Mammary epithelial cell (primary cell): ENCODE measurements at regions of chr11 and their contacts with region 1.

Region 1: DNA sequence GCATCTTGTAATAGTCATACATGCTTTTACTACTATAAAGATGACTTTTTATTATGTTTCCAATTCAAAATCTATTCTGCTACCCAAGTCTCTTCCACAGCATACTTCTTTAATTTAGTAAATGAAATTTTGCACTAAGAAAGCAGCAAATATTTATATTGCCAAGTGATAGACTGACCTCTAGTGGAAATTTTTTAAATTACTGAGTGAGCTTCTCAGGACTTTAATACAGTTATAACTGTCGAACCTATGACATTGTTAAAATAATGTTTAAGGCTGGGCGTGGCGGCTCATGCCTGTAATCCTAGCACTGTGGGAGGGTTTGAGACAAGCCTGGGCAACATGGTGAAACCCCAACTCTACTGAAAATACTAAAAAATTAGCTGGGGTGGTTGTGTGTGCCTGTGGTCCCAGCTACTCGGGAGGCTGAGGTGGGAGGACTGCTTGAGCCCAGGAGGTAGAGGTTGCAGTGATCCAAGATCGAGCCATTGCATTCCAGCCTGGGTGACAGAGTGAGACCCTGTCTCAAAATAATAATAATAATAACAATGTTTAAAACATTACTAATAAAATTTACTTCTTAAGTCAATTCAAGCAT is 27.3 kb downstream of the STK33 start:
- DNase-seq: peak; percentile 55
- H3K4me3 ChIP-seq: no peak overlapping the region
- H3K27ac ChIP-seq: peak overlapping the region; percentile 29
- H3K4me1 ChIP-seq: peaks cover 13% of the 10 kb centered on the region
- H3K27me3 ChIP-seq: no peaks in the 10 kb centered on the region
- CTCF ChIP-seq: peak; percentile 43 to 50

Region 2: DNA sequence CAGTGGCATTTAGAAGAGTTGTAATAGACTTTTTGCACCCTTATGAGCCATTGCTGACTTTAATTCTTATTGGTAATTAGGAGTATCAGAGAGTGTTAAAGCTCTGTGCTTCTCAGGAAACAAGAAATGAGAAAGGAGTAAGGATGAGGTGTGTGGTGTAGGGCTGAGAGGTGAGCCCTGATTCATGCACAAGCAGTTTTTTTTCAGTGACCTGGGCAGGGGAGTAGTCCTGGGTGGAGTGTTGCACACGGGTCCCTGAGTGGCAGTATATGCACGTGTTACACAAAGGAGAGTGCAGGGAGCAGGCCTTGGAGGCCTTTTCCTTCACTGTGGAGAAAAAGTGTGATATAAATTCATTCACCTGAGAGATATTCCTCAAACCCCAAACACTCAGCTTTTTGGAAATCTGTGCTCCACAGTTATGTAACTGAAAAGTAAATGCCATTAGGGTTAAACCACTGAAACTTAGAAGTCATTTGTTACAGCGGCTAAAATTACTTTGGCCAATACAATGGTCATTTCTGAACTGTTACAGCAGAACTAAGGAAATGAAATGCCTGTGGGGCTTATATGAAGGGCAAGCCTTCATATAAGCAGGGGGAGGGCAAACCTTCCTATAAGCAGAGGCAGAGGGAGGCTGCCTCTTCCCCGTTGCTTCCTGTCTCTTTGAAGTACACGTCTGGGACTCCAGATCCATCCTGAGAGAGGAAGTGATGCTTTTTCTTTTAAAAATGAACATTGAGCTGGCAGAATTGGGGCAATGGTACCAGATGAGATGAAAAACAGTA is 1144.0 kb before region 1 on chr11:
- CTCF ChIA-PET with region 1: no interaction called
- dilution Hi-C with region 1: no loop called
- in situ Hi-C with region 1: no loop called
- intact Hi-C with region 1: no loop called
- DNase-seq: peak; percentile 4
- H3K4me3 ChIP-seq: no peak overlapping the region
- H3K27ac ChIP-seq: no peak overlapping the region
- H3K4me1 ChIP-seq: peaks cover 14% of the 10 kb centered on the region
- H3K27me3 ChIP-seq: no peaks in the 10 kb centered on the region
- CTCF ChIP-seq: peak in 1 of 2 donors; percentile 14

Region 3: GRCh38 chr11:8006349-8006977 is 560.2 kb before region 1 on chr11:
- CTCF ChIA-PET with region 1: no interaction called
- dilution Hi-C with region 1: no loop called
- in situ Hi-C with region 1: no loop called
- intact Hi-C with region 1: loop called (anchors 1 kb)
- DNase-seq: peak; percentile 53
- H3K4me3 ChIP-seq: no peak overlapping the region
- H3K27ac ChIP-seq: no peak overlapping the region
- H3K4me1 ChIP-seq: no peaks in the 10 kb centered on the region
- H3K27me3 ChIP-seq: no peaks in the 10 kb centered on the region
- CTCF ChIP-seq: peak; percentile 93 to 95

Region 4: GRCh38 chr11:8192016-8192895 is 374.5 kb before region 1 on chr11:
- CTCF ChIA-PET with region 1: no interaction called
- dilution Hi-C with region 1: no loop called
- in situ Hi-C with region 1: no loop called
- intact Hi-C with region 1: loop called (anchors 1 kb)
- DNase-seq: peak; percentile 54
- H3K4me3 ChIP-seq: no peak overlapping the region
- H3K27ac ChIP-seq: no peak overlapping the region
- H3K4me1 ChIP-seq: no peaks in the 10 kb centered on the region
- H3K27me3 ChIP-seq: peaks cover 2% of the 10 kb centered on the region
- CTCF ChIP-seq: peak; percentile 88 to 97

Region 5: GRCh38 chr11:8247312-8247711 is 319.4 kb before region 1 on chr11:
- CTCF ChIA-PET with region 1: interaction called, 5 read pairs
- dilution Hi-C with region 1: no loop called
- in situ Hi-C with region 1: no loop called
- intact Hi-C with region 1: loop called (anchors 1 kb)
- DNase-seq: no peak
- H3K4me3 ChIP-seq: no peak overlapping the region
- H3K27ac ChIP-seq: no peak overlapping the region
- H3K4me1 ChIP-seq: no peaks in the 10 kb centered on the region
- H3K27me3 ChIP-seq: no peaks in the 10 kb centered on the region
- CTCF ChIP-seq: peak; percentile 67 to 83

Region 6: DNA sequence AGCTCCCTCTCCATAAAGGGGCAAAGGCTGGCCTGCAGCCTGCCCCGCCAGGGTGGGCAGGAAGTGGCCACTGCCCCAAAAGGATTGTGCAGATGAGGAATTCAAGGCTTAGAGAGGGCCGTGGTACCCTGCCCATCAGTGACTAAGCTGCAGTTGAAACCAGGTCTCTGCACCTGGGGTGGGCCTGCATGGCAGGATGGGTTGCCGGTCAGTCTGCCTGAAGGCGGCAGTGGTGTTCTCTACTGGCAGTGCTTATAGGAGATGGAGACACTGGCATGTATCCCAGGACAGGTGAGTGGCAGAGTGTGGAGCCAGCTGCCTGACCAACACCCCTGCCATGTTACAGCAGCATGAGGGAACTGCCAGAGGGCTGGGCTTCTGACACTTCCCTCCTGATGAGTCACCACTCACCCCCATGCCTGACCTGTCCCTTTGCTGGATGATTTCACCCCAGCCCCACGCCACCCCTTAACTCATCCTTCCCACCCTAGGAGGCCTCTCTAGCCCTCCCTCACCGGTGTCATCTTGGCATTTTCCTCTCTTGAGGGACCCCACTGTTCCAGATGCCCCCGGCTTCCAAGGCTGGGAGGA is 232.8 kb before region 1 on chr11:
- CTCF ChIA-PET with region 1: no interaction called
- dilution Hi-C with region 1: no loop called
- in situ Hi-C with region 1: no loop called
- intact Hi-C with region 1: loop called (anchors 1 kb)
- DNase-seq: peak; percentile 66
- H3K4me3 ChIP-seq: no peak overlapping the region
- H3K27ac ChIP-seq: no peak overlapping the region
- H3K4me1 ChIP-seq: peaks cover 29% of the 10 kb centered on the region
- H3K27me3 ChIP-seq: no peaks in the 10 kb centered on the region
- CTCF ChIP-seq: no peak

Region 7: GRCh38 chr11:8584511-8584910 is 17.8 kb after region 1 on chr11:
- CTCF ChIA-PET with region 1: no interaction called
- dilution Hi-C with region 1: no loop called
- in situ Hi-C with region 1: no loop called
- intact Hi-C with region 1: no loop called
- DNase-seq: no peak
- H3K4me3 ChIP-seq: no peak overlapping the region
- H3K27ac ChIP-seq: no peak overlapping the region
- H3K4me1 ChIP-seq: no peaks in the 10 kb centered on the region
- H3K27me3 ChIP-seq: no peaks in the 10 kb centered on the region
- CTCF ChIP-seq: no peak

Region 8: DNA sequence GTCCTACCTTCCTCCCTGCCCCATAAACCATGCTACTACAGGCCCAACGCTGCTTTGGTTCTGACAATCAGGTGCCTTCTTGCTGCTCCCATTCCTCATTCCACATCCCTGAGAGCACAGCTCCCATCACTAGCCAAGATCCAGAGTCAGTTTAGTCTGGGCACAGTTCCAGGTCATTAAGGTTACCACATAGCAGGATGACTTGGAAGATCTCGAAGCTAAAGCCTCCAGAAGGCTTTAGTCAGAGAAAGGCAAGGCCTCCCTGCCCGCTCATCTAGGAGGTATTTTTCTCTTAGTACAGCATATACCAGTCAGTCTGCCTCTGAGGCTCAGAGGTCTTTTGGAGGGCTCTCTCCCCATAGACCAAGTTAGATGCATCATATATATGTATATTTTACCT is 85.4 kb after region 1 on chr11:
- CTCF ChIA-PET with region 1: no interaction called
- dilution Hi-C with region 1: no loop called
- in situ Hi-C with region 1: no loop called
- intact Hi-C with region 1: no loop called
- DNase-seq: peak; percentile 86
- H3K4me3 ChIP-seq: no peak overlapping the region
- H3K27ac ChIP-seq: no peak overlapping the region
- H3K4me1 ChIP-seq: peaks cover 13% of the 10 kb centered on the region
- H3K27me3 ChIP-seq: no peaks in the 10 kb centered on the region
- CTCF ChIP-seq: no peak

Region 9: DNA sequence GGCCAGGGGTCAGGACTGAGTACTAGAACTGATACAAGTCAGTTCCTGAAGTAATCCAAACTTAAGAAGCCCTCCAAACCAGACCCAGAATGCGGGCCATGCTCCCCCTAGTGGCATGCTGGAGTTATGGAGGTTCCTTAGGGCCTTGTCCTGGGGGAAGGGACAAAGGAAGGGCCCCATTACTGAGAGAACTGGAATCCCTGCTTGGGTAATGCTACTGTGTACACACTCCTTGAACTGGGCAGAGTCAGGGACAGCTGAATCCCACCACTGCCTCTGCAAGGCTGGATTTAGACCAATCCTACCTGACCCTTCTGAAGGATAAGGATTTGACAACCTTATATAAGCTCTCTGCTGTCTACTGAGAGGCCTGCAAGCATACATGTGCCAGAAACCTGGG is 246.9 kb after region 1 on chr11:
- CTCF ChIA-PET with region 1: no interaction called
- dilution Hi-C with region 1: no loop called
- in situ Hi-C with region 1: no loop called
- intact Hi-C with region 1: loop called (anchors 1 kb)
- DNase-seq: peak; percentile 72
- H3K4me3 ChIP-seq: no peak overlapping the region
- H3K27ac ChIP-seq: peak overlapping the region; percentile 94
- H3K4me1 ChIP-seq: peaks cover 46% of the 10 kb centered on the region
- H3K27me3 ChIP-seq: no peaks in the 10 kb centered on the region
- CTCF ChIP-seq: peak; percentile 91 to 93